ENCODE measurements at regions of chr16 and their contacts with region 1.

Region 1: DNA sequence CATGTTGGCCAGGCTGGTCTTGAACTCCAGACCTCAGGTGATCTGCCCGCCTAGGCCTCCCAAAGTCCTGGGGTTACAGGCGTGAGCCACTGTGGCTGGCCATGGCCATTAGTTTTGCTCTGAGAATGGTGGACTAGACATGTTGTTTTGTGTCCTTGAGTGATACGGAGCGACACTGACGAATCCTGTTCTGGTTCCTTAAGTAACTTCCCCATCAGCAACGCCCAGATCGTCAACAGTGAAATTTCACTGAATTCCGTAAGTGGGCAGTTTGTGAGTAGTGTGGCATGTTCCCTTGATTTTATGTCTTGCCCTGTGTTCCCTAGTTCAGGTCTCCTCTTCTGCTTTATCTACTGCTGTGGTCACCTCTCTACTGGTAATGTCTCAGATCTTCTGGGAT is 67.4 kb downstream of the SNX29 start:
- DNase-seq: no peak
- ATAC-seq: no peak
- H3K4me3 ChIP-seq: no peak overlapping the region
- H3K27ac ChIP-seq: no peak overlapping the region
- H3K4me1 ChIP-seq: no peaks in the 10 kb centered on the region
- H3K27me3 ChIP-seq: no peaks in the 10 kb centered on the region
- CTCF ChIP-seq: no peak

Region 2: GRCh38 chr16:11484691-11485258 is 559.2 kb before region 1 on chr16:
- CTCF ChIA-PET with region 1: no interaction called
- POLR2A ChIA-PET with region 1: no interaction called
- in situ Hi-C with region 1: no loop called
- intact Hi-C with region 1: no loop called
- DNase-seq: no peak
- ATAC-seq: no peak
- H3K4me3 ChIP-seq: no peak overlapping the region
- H3K27ac ChIP-seq: no peak overlapping the region
- H3K4me1 ChIP-seq: no peaks in the 10 kb centered on the region
- H3K27me3 ChIP-seq: no peaks in the 10 kb centered on the region
- CTCF ChIP-seq: no peak

Region 3: GRCh38 chr16:11977376-11978041 is 66.4 kb before region 1 on chr16:
- CTCF ChIA-PET with region 1: no interaction called
- POLR2A ChIA-PET with region 1: no interaction called
- in situ Hi-C with region 1: no loop called
- intact Hi-C with region 1: no loop called
- DNase-seq: no peak
- ATAC-seq: peak; percentile 50
- H3K4me3 ChIP-seq: peak overlapping the region; percentile 73 to 86
- H3K27ac ChIP-seq: peak overlapping the region; percentile 78
- H3K4me1 ChIP-seq: peaks cover 6% of the 10 kb centered on the region; the same call in 1 of the 2 replicates
- H3K27me3 ChIP-seq: no peaks in the 10 kb centered on the region
- CTCF ChIP-seq: no peak

Region 4: GRCh38 chr16:12026741-12027490 is 17.0 kb before region 1 on chr16:
- CTCF ChIA-PET with region 1: no interaction called
- POLR2A ChIA-PET with region 1: interaction called, 10 read pairs
- in situ Hi-C with region 1: no loop called
- intact Hi-C with region 1: no loop called
- DNase-seq: no peak
- ATAC-seq: no peak
- H3K4me3 ChIP-seq: no peak overlapping the region
- H3K27ac ChIP-seq: no peak overlapping the region
- H3K4me1 ChIP-seq: no peaks in the 10 kb centered on the region
- H3K27me3 ChIP-seq: no peaks in the 10 kb centered on the region
- CTCF ChIP-seq: no peak

Region 5: DNA sequence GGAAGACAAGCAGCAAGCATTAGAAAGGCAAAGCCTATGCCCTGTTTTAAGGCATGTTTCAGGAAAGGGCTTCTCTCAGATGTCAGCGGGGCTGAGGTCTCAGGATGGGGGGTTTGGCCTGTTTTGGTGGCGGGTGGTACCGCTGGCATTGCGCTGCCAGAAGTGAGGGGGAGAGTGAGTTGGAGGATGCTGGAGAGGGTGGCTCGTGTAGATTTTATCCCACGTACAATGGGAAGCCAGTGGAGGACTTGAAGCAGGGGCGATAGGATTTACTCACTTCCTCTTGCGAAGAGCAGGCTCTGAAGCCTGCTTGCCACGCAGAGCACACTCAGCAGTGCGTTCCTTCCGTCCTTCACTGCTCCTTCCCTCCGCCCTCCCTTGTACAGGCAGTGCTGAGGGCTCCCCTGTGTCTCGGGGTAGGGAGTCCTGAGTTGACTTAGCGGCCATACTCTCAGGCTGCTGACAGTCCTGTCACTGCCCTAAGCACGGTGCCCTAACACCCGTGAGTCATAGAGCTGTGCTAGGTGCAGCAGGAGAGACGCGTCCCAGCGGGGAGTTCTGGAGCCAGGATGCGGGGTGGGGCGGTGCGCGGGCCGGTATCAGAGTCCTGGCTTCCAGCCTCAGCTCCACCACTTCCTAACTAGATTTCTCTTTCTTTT is 45.7 kb after region 1 on chr16:
- CTCF ChIA-PET with region 1: no interaction called
- POLR2A ChIA-PET with region 1: no interaction called
- in situ Hi-C with region 1: no loop called
- intact Hi-C with region 1: no loop called
- DNase-seq: no peak
- ATAC-seq: peak; percentile 89
- H3K4me3 ChIP-seq: peak overlapping the region in 1 of 2 experiments; percentile 38; a peak in 2 of 4 replicates
- H3K27ac ChIP-seq: no peak overlapping the region
- H3K4me1 ChIP-seq: peaks cover 7% of the 10 kb centered on the region; the same call in 1 of the 2 replicates
- H3K27me3 ChIP-seq: no peaks in the 10 kb centered on the region
- CTCF ChIP-seq: no peak